Activated T-helper 2 cell treated with anti-CD3 and anti-CD28 coated beads, Interferon-gamma antibody, Interleukin-2, Interleukin-4, amounts not matched to agents 10 μg/mL and 5 μg/mL and 100 μg/mL, durations not matched to agents 14 hours and 24 hours and 36 hours (primary cell): ENCODE measurements at regions of chr1 and their contacts with region 1.

Region 1: GRCh38 chr1:221069178-221069903 is 190.1 kb downstream of the HLX start:
- DNase-seq: no peak
- H3K4me3 Mint-ChIP-seq: no peak overlapping the region
- H3K27ac Mint-ChIP-seq: peak overlapping the region; percentile 94
- H3K4me1 Mint-ChIP-seq: peaks cover 40% of the 10 kb centered on the region
- H3K27me3 Mint-ChIP-seq: no peaks in the 10 kb centered on the region

Region 2: GRCh38 chr1:220594356-220594755 is 475.0 kb before region 1 on chr1:
- intact Hi-C with region 1: no loop called
- DNase-seq: no peak
- H3K4me3 Mint-ChIP-seq: no peak overlapping the region
- H3K27ac Mint-ChIP-seq: no peak overlapping the region
- H3K4me1 Mint-ChIP-seq: no peaks in the 10 kb centered on the region
- H3K27me3 Mint-ChIP-seq: peaks cover 1% of the 10 kb centered on the region

Region 3: DNA sequence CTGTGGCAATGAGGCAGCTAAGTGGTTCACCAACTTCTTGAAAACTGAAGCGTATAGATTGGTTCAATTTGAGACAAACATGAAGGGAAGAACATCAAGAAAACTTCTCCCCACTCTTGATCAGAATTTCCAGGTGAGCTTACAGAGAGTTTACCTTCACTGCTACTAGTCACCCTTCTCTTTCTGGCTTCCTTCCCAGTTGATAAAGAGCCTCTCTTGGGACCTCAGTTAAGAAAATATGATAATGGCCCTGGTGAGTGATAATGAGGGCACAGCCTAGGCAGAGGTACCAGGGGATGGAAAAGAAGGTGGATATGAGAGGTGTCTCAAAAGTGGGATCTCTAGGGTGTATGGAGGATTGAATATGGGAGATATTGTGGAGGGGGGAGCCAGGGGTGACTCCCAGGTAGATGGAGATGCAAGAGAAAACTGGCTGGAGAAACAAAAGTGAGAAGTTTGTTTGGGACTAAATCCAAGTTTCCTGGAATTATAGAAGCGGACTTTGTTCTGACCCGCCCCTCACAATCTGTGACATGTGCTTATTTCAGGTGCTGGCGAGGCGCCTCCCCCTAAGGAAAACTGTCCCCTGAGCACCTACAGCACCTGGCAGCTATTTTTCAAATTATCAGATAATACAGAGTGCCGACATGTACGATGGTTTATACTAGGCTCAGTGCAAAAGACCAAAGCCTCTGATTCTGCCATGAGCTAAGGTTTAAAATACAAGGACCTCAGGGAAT is 307.5 kb before region 1 on chr1:
- intact Hi-C with region 1: no loop called
- DNase-seq: no peak
- H3K4me3 Mint-ChIP-seq: no peak overlapping the region
- H3K27ac Mint-ChIP-seq: no peak overlapping the region
- H3K4me1 Mint-ChIP-seq: no peaks in the 10 kb centered on the region
- H3K27me3 Mint-ChIP-seq: peaks cover 4% of the 10 kb centered on the region

Region 4: DNA sequence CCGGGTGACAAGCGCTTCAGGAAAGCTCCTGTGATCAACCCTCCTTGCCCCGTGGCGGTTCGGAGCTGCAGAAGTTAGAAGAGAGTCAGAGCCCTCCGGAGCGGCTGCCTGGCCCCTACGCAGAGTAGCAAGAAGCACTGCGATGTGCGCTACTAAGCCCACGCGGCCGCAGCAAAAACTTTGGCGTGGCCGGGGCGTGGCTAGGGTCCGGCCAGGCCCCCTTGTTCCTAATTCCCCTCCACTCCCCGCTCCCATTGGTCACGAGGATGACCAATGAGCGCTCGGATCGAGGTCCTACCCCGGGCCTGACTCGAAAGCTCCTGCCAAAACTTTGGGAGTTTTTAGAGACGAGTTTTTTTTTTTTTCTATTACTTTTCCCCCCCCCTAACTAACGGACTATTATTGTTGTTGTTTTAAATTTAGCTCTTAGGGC is 190.2 kb before region 1 on chr1 and contains the start of gene HLX:
- intact Hi-C with region 1: loop called (anchors 1 kb)
- DNase-seq: peak; percentile 15
- H3K4me3 Mint-ChIP-seq: peak within 1 kb of the TSS; percentile 85
- H3K27ac Mint-ChIP-seq: peak within 1 kb of the TSS; percentile 78
- H3K4me1 Mint-ChIP-seq: peaks cover 31% of the 10 kb centered on the region
- H3K27me3 Mint-ChIP-seq: peaks cover 70% of the 10 kb centered on the region
- total RNA-seq, gene HLX: 8.2 and 10.4 TPM in 2 replicates

Region 5: GRCh38 chr1:221045842-221046831 is 23.2 kb before region 1 on chr1:
- intact Hi-C with region 1: loop called (anchors 1 kb)
- DNase-seq: no peak
- H3K4me3 Mint-ChIP-seq: no peak overlapping the region
- H3K27ac Mint-ChIP-seq: no peak overlapping the region
- H3K4me1 Mint-ChIP-seq: peaks cover 15% of the 10 kb centered on the region
- H3K27me3 Mint-ChIP-seq: peaks cover 2% of the 10 kb centered on the region

Region 6: DNA sequence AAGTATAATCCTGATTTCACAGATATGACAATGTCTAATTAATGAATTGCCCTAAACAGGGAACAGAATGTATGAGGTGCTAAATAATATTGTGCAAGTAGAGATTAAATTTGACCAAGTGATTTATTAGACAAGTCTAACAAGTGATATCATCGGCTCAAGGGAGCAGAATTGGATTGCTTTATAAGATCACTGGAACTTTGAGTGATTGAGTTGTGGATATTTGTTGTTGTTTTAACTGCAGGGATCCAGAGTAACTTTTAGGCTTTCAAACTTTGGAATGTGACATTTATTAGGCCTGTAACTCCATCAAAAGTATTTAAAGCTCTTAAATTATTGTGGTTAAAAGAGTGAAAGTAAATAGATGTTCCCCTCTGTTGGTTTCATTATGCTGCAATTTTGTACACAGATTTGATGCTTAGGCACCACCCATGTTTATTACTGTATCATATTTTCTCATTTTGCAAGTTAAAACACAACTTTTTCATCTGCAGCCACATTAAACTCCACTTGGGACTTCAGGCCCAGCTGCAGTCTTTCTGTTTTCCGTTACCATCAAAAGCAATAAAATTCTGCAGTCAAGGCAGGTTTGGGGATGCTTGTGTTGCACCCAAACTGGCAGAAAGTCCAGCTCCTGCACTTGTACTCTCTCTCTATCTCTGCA is 16.5 kb after region 1 on chr1:
- intact Hi-C with region 1: loop called (anchors 1 kb)
- DNase-seq: no peak
- H3K4me3 Mint-ChIP-seq: no peak overlapping the region
- H3K27ac Mint-ChIP-seq: no peak overlapping the region
- H3K4me1 Mint-ChIP-seq: peaks cover 9% of the 10 kb centered on the region
- H3K27me3 Mint-ChIP-seq: no peaks in the 10 kb centered on the region

Region 7: GRCh38 chr1:221097479-221098383 is 28.4 kb after region 1 on chr1:
- intact Hi-C with region 1: loop called (anchors 2 kb)
- DNase-seq: no peak
- H3K4me3 Mint-ChIP-seq: no peak overlapping the region
- H3K27ac Mint-ChIP-seq: peak overlapping the region; percentile 54
- H3K4me1 Mint-ChIP-seq: peaks cover 18% of the 10 kb centered on the region
- H3K27me3 Mint-ChIP-seq: no peaks in the 10 kb centered on the region

Region 8: GRCh38 chr1:221203224-221204054 is 134.1 kb after region 1 on chr1:
- intact Hi-C with region 1: loop called (anchors 2 kb)
- DNase-seq: peak; percentile 46
- H3K4me3 Mint-ChIP-seq: no peak overlapping the region
- H3K27ac Mint-ChIP-seq: no peak overlapping the region
- H3K4me1 Mint-ChIP-seq: peaks cover 16% of the 10 kb centered on the region
- H3K27me3 Mint-ChIP-seq: no peaks in the 10 kb centered on the region

Region 9: DNA sequence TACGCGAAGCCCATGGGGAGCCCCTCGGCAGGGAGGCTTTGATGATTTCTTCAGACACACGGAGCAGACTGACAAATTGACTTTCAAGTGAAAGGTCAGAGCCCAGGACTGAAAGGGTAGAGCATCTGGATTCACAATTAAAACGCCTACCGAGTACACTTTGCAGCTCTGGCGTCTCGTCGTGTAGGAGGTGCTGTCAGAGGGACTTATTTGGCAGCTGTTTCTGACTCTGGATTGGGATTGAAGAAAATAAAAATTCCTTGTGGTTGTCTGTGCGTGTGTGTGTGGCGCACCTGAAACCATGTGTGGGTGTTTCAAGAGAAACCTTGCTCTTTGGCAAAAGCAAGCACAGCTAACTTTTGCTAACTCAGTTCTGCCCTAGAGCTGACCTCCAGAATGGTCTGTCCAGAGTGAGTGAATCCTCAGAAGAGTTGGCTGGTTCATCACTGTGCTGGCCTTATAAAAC is 158.6 kb after region 1 on chr1:
- intact Hi-C with region 1: loop called (anchors 1 kb)
- DNase-seq: no peak
- H3K4me3 Mint-ChIP-seq: no peak overlapping the region
- H3K27ac Mint-ChIP-seq: peak overlapping the region; percentile 87
- H3K4me1 Mint-ChIP-seq: peaks cover 15% of the 10 kb centered on the region
- H3K27me3 Mint-ChIP-seq: no peaks in the 10 kb centered on the region